A673 (cell line): ENCODE measurements at regions of chr5 and their contacts with region 1.

Region 1: GRCh38 chr5:90529194-90529938 is at the start of gene LYSMD3:
- DNase-seq: peak; percentile 98
- H3K4me3 ChIP-seq: peak within 1 kb of the TSS; percentile 97
- H3K27ac ChIP-seq: peak within 1 kb of the TSS; percentile 86
- H3K4me1 ChIP-seq: peaks cover 17% of the 10 kb centered on the region
- H3K27me3 ChIP-seq: peaks cover 3% of the 10 kb centered on the region
- CTCF ChIP-seq: no peak
- total RNA-seq, gene LYSMD3: 14.0 and 14.8 TPM in 2 replicates

Region 2: GRCh38 chr5:88666761-88667495 is 1862.4 kb before region 1 on chr5:
- CTCF ChIA-PET with region 1: no interaction called
- POLR2A ChIA-PET with region 1: no interaction called
- intact Hi-C with region 1: no loop called
- DNase-seq: peak; percentile 54
- H3K4me3 ChIP-seq: peak overlapping the region; percentile 50
- H3K27ac ChIP-seq: peak overlapping the region; percentile 68
- H3K4me1 ChIP-seq: peaks cover 33% of the 10 kb centered on the region
- H3K27me3 ChIP-seq: no peaks in the 10 kb centered on the region
- CTCF ChIP-seq: no peak

Region 3: GRCh38 chr5:90293931-90294330 is 235.4 kb before region 1 on chr5:
- CTCF ChIA-PET with region 1: no interaction called
- POLR2A ChIA-PET with region 1: no interaction called
- intact Hi-C with region 1: loop called (anchors 10 kb)
- DNase-seq: no peak
- H3K4me3 ChIP-seq: no peak overlapping the region
- H3K27ac ChIP-seq: no peak overlapping the region
- H3K4me1 ChIP-seq: peaks cover 20% of the 10 kb centered on the region
- H3K27me3 ChIP-seq: peaks cover 86% of the 10 kb centered on the region
- CTCF ChIP-seq: no peak

Region 4: DNA sequence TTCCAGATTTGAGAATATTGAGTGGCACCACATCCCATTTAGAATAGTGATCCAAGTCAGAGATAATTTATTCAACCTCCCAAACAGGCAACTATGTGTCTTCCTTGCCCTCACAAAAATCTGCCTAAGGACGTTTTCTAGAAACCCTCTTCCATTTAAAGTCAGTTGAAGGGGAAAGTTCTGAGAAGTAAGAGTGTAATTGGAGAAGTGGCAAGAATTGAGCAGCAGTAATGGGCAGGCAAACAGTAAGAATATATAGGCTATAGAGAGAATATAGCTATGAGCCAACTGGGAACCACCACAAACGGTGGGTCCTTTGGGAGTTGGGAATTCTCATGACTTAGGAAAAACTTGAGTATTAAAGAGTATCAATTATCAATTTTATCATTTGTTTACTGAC is 88.7 kb before region 1 on chr5:
- CTCF ChIA-PET with region 1: no interaction called
- POLR2A ChIA-PET with region 1: no interaction called
- intact Hi-C with region 1: loop called (anchors 2 kb)
- DNase-seq: no peak
- H3K4me3 ChIP-seq: no peak overlapping the region
- H3K27ac ChIP-seq: no peak overlapping the region
- H3K4me1 ChIP-seq: peaks cover 3% of the 10 kb centered on the region
- H3K27me3 ChIP-seq: no peaks in the 10 kb centered on the region
- CTCF ChIP-seq: no peak

Region 5: DNA sequence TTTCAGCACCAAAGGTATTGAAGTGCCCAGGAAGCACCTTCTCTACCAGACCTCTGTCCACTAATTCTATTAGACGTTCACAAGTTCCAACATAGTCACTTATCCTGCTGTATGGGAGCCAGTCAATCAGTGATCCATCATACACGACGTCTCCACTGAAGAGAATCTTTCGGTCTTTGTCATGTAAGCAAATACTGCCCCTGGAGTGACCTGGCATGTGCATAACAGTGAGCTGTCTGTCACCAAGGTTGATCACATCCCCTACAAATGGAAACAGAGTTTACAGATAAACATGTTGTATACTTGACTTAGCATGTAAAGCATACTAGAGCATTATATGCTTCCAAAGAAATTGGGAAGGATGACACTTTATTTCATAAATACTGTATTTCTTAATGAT is 68.1 kb before region 1 on chr5:
- CTCF ChIA-PET with region 1: no interaction called
- POLR2A ChIA-PET with region 1: no interaction called
- intact Hi-C with region 1: loop called (anchors 5 kb)
- DNase-seq: no peak
- H3K4me3 ChIP-seq: no peak overlapping the region
- H3K27ac ChIP-seq: no peak overlapping the region
- H3K4me1 ChIP-seq: peaks cover 7% of the 10 kb centered on the region
- H3K27me3 ChIP-seq: no peaks in the 10 kb centered on the region
- CTCF ChIP-seq: no peak

Region 6: GRCh38 chr5:90474235-90475109 is 54.9 kb before region 1 on chr5 and contains the starts of genes MBLAC2 and POLR3G:
- CTCF ChIA-PET with region 1: no interaction called
- POLR2A ChIA-PET with region 1: no interaction called
- intact Hi-C with region 1: no loop called
- DNase-seq: peak; percentile 95
- H3K4me3 ChIP-seq: peak within 1 kb of the TSS; percentile 67
- H3K27ac ChIP-seq: peak within 1 kb of the TSS; percentile 74
- H3K4me1 ChIP-seq: peaks cover 26% of the 10 kb centered on the region
- H3K27me3 ChIP-seq: no peaks in the 10 kb centered on the region
- CTCF ChIP-seq: peak; percentile 47
- total RNA-seq, gene MBLAC2: 6.5 and 7.8 TPM in 2 replicates
- total RNA-seq, gene POLR3G: 10.6 and 11.8 TPM in 2 replicates

Region 7: DNA sequence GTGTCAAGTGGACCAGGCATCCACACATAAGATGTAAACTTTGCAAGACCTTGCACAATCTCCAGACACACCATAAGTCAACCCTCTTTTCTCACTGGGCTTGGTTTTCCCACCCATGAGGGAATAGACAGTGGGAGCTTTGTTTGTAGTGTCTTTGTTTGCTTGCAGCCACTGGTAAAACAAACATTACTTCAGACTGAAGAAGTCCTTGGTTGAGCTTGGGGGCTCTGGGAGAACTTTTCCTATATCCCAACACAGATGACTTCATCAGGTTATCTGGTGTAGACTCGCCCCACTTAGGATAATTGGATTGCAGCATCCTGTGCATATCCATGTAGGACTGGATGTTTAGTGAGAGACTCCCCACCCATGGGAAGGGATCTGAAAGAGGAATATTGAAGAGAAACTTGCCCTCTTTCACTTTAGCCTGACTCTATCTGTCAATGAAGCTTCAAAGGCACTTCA is 17.7 kb after region 1 on chr5:
- CTCF ChIA-PET with region 1: no interaction called
- POLR2A ChIA-PET with region 1: no interaction called
- intact Hi-C with region 1: loop called (anchors 2 kb)
- DNase-seq: peak; percentile 23
- H3K4me3 ChIP-seq: no peak overlapping the region
- H3K27ac ChIP-seq: no peak overlapping the region
- H3K4me1 ChIP-seq: peaks cover 28% of the 10 kb centered on the region
- H3K27me3 ChIP-seq: no peaks in the 10 kb centered on the region
- CTCF ChIP-seq: no peak